B cell (primary cell): ENCODE measurements at regions of chr1 and their contacts with region 1.

Region 1: DNA sequence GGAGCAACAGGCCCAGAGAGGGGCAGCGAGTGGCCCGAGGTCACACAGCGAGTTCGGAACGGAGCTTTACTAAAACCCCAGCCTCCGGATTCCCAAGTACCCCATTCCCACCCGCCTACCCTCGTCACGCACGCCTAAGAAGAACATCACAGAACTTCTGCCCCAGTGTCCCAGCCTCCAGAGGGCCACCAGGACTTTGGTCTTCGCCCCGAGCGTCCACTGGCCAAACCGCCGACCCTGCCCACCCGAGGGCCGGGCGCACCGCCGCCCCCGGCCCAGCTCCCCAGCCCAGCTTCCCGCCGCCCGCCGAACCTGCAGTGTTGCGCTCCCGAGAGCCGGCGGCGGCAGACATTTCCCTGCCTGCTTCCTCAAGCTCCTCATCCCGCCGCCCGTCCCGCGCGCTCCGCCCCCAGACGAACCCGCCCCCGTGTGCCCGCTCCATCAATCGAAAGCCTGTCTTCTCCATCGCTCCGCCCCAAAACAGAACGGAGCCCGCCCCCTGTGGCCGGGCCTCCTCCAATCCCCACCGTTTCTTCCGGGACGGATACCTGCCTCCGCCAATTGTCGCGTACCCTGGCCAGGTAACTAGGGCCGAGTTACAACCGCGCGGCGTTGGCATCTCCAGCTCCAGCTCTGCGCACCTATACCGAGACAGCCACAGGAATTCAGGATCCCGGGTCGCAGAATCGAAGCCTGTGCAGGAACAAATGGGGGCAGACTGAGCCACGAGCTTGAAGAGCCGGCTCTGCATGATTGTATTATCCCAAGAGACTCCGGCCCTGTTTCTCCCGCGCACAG is 15.3 kb downstream of the INPP5B start:
- DNase-seq: peak; percentile 97
- ATAC-seq: peak; percentile 99
- H3K4me3 ChIP-seq: peak overlapping the region; percentile 69 to 98 (median 97)
- H3K4me3 Mint-ChIP-seq: peak overlapping the region; percentile 89
- H3K27ac ChIP-seq: peak overlapping the region in 1 of 2 donors; percentile 80
- H3K27ac Mint-ChIP-seq: peak overlapping the region; percentile 83
- H3K4me1 ChIP-seq: peaks cover 18 to 28% of the 10 kb centered on the region in 2 donors
- H3K4me1 Mint-ChIP-seq: peaks cover 42% of the 10 kb centered on the region
- H3K27me3 ChIP-seq: no peaks in the 10 kb centered on the region
- H3K27me3 Mint-ChIP-seq: no peaks in the 10 kb centered on the region
- CTCF ChIP-seq: no peak

Region 2: GRCh38 chr1:37946703-37947360 is 15.3 kb after region 1 on chr1 and contains the start of gene INPP5B:
- CTCF ChIA-PET with region 1: interaction called, 8 read pairs
- POLR2A ChIA-PET with region 1: interaction called, 4 read pairs
- intact Hi-C with region 1: loop called (anchors 1 kb)
- DNase-seq: peak; percentile 79
- ATAC-seq: peak; percentile 100
- H3K4me3 ChIP-seq: peak within 1 kb of the TSS; percentile 50 to 73 (median 67)
- H3K4me3 Mint-ChIP-seq: peak within 1 kb of the TSS; percentile 91
- H3K27ac ChIP-seq: peak within 1 kb of the TSS in 1 of 2 donors; percentile 56
- H3K27ac Mint-ChIP-seq: peak within 1 kb of the TSS; percentile 86
- H3K4me1 ChIP-seq: peaks cover 14 to 19% of the 10 kb centered on the region in 2 donors
- H3K4me1 Mint-ChIP-seq: peaks cover 14% of the 10 kb centered on the region
- H3K27me3 ChIP-seq: no peaks in the 10 kb centered on the region
- H3K27me3 Mint-ChIP-seq: no peaks in the 10 kb centered on the region
- CTCF ChIP-seq: no peak
- total RNA-seq, gene INPP5B: 63.3 and 66.9 TPM in 2 replicates

Region 3: DNA sequence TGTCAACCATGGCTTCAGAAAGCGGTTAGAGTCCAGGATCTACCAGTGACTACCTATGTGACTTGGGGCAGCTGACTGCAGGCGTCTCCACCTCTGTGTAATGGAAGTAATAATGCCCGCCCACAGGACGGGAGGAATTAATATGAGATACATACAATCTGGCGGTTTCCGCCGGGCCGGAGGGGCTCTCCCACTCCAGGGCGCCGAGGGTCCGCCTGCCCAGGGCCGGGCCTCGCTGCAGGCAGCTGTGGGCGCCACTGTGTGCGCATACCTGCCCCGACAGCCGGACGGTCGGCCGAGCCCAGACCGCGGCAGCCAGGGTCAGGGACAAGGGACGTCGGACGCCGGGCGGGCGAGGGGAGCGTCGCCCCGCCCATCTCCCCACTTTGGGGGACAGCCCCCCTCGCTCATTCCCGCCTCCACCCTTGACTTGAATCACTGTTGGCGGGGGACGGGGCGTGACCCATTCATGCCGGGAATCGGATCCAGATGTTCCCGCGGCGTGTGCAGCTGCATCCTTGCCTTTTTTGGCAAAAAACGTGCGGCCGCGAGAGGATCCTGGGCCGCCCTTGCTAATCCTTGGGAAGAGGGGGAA is 64.3 kb after region 1 on chr1:
- CTCF ChIA-PET with region 1: no interaction called
- POLR2A ChIA-PET with region 1: no interaction called
- intact Hi-C with region 1: no loop called
- DNase-seq: no peak
- ATAC-seq: peak; percentile 63
- H3K4me3 ChIP-seq: peak overlapping the region in 4 of 5 experiments; percentile 52 to 74 (median 57)
- H3K4me3 Mint-ChIP-seq: peak overlapping the region; percentile 84
- H3K27ac ChIP-seq: peak overlapping the region in 1 of 2 donors; percentile 59
- H3K27ac Mint-ChIP-seq: peak overlapping the region; percentile 26
- H3K4me1 ChIP-seq: peaks cover 9 to 15% of the 10 kb centered on the region in 2 donors
- H3K4me1 Mint-ChIP-seq: peaks cover 15% of the 10 kb centered on the region
- H3K27me3 ChIP-seq: no peaks in the 10 kb centered on the region
- H3K27me3 Mint-ChIP-seq: no peaks in the 10 kb centered on the region
- CTCF ChIP-seq: no peak